Transverse colon (tissue), 4 donors: ENCODE measurements at regions of chr17 and their contacts with region 1.

Region 1: GRCh38 chr17:61635913-61636432 is 45.0 kb upstream of the NACA2 start:
- DNase-seq: peak; percentile 45
- H3K4me3 ChIP-seq: no peak overlapping the region
- H3K27ac ChIP-seq: no peak overlapping the region
- H3K4me1 ChIP-seq: no peaks in the 10 kb centered on the region
- H3K27me3 ChIP-seq: peaks cover 25% of the 10 kb centered on the region
- CTCF ChIP-seq: peak; percentile 44 to 64 (median 53)
- EP300 ChIP-seq: no peak
- POLR2A ChIP-seq: no peak

Region 2: DNA sequence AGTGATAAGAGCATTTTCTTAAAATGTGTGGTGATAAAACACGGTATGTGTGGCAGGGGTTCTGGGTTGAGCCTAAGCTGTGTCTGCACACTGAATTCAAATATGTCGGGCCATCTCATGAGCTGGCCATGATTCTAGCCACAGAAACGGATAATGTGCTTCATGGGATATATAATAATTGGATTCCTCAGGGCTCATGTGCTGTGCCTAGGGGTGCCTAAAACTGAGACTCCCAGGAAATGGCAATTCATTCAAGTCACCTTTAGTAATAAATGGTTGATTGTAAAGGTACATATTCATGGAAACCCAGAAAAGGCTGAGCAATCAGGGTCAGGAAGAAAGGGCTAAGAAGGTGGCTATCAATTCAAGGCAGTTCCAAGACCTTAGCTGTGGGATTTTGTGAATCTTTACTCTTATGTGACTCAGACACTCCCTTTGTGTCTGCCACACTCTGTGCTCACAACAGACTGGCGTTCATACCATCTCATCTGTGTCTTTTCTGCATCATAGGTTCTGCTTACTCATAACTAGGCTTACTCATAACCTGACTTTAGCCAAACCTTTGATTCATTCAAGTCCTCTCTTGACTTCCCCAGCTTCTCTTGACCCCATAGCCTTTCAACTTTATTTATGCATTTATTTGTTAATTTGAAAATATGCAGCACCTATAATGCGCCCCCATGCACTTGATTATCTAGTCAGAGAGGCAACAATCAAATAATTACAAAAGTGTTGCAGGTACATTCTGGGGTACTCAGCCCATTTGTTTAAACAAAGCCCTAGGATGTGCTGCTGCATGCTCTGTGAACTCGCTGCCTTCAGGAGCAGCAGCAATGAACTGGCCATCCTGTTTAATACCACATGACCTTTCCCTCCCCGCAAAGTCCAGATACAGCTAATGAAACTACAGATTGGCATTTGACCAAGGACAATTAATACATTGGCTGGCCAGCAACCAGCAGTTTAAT is 457.5 kb after region 1 on chr17:
- in situ Hi-C with region 1: loop called in 1 of 4 experiments (anchors 25 kb)
- intact Hi-C with region 1: no loop called
- DNase-seq: no peak
- H3K4me3 ChIP-seq: no peak overlapping the region
- H3K27ac ChIP-seq: no peak overlapping the region
- H3K4me1 ChIP-seq: peaks cover 0 to 3% (median 2%) of the 10 kb centered on the region in 4 donors
- H3K27me3 ChIP-seq: no peaks in the 10 kb centered on the region
- CTCF ChIP-seq: no peak
- EP300 ChIP-seq: no peak
- POLR2A ChIP-seq: no peak

Region 3: DNA sequence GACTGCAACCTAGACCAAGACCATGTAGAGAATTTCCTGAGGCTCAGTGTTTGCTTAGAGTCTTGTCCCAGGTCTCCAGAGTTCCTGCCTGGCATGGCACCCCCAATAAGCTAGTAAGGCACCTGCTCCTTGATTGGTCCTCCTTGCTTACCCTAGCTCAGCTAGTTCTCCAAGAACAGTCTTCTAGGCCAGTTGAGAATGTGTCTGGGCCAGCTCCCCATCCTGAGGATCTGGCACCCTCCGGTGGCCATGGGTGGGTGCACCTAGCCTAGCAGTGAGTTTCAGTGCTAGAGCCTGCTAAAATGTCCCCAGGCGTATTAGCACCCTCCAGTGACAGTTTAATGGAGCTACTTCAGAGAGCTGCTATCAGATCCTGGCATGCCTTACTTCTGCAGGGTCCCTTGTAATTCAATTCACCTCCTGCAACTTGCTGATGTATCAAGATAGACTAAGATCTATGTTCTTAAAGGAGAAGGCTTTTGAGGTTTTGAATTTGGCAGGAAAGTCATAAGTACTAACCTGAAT is 473.5 kb after region 1 on chr17:
- in situ Hi-C with region 1: loop called in 1 of 4 experiments (anchors 25 kb)
- intact Hi-C with region 1: no loop called
- DNase-seq: peak; percentile 78
- H3K4me3 ChIP-seq: no peak overlapping the region
- H3K27ac ChIP-seq: peak overlapping the region in 2 of 4 donors; percentile 72 to 79
- H3K4me1 ChIP-seq: peaks cover 0 to 28% (median 13%) of the 10 kb centered on the region in 4 donors
- H3K27me3 ChIP-seq: no peaks in the 10 kb centered on the region
- CTCF ChIP-seq: peak; percentile 36 to 82 (median 65)
- EP300 ChIP-seq: no peak
- POLR2A ChIP-seq: no peak